ENCODE measurements at regions of chr7 and their contacts with region 1.

Region 1: GRCh38 chr7:151017953-151018420 is 6.3 kb downstream of the ATG9B start:
- DNase-seq: no peak
- H3K4me3 ChIP-seq: peak overlapping the region; percentile 47
- CTCF ChIP-seq: peak; percentile 100

Region 2: DNA sequence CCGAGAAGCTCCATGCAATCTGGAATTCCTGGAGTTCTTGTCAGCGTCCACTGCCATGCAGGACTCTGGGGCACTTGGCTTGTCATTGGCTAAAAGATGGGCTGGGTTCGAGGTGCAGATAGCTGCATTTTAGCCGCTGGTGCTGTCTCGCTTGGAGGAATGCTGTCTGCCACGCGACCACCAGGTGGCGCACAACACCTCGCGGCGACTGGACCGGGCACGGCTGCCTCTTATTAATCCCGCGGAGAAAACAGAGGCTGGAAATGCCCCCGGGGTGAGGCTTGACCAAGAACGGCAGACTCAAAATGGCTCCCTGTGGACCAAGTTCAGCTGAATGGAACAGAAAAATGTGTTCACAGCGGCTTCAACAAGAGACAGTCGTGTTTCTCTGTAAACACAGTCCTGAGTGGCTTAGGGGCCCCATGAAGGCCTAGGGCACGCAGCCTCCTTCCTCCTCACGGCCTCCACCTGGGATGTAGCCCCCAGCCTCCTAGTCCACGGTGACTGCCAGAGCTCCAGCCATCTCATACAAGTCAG is 119.4 kb before region 1 on chr7:
- CTCF ChIA-PET with region 1: interaction called, 22 read pairs
- POLR2A ChIA-PET with region 1: no interaction called
- DNase-seq: no peak
- H3K4me3 ChIP-seq: no peak overlapping the region
- CTCF ChIP-seq: peak; percentile 95

Region 3: DNA sequence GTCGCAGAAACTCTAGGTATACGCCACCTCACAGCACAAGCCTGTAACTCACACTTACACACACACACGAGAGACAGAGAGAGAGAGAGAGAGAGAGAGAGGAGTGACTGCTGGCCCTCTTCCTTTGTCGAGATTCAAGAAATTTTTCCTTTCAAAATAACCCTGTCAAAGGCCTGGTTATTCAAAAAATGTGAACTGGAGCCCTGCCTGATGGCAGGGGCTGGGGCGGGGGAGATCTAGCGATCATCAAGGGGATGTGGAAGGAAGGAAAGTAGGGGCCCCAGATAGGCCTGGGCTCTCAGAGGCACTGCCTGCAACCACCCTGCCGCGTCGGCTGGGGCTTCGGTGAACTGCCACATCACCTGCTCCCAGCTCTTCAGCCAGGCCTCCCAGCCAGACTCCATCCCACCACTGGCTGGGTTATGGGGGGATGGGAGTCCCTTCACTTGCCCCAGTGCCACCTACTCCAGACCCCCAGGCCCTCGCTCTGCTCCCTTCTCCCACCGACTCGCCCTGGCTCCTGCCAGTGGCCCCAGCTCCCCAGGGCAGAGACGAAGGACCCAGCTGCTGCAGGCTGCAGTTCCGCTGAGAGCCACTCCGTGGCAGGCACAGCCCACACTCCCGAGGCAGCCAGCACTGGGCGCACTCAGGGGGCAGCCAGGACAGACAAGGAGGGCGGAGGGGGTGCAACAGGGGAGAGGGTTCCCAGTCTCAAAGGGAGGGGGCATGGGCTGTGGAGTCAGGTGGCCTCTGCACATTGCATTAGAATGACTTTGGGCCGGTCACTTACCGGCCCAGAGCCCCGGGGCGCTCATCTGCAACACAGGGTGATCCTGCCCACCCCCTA is 55.2 kb before region 1 on chr7:
- CTCF ChIA-PET with region 1: interaction called, 34 read pairs
- POLR2A ChIA-PET with region 1: no interaction called
- DNase-seq: no peak
- H3K4me3 ChIP-seq: no peak overlapping the region
- CTCF ChIP-seq: peak; percentile 97

Region 4: GRCh38 chr7:150988230-150989226 is 29.5 kb before region 1 on chr7:
- CTCF ChIA-PET with region 1: interaction called, 18 read pairs
- POLR2A ChIA-PET with region 1: no interaction called
- DNase-seq: no peak
- H3K4me3 ChIP-seq: no peak overlapping the region
- CTCF ChIP-seq: peak; percentile 72

Region 5: GRCh38 chr7:150994141-150994964 is 23.6 kb before region 1 on chr7:
- CTCF ChIA-PET with region 1: interaction called, 14 read pairs
- POLR2A ChIA-PET with region 1: no interaction called
- DNase-seq: no peak
- H3K4me3 ChIP-seq: no peak overlapping the region
- CTCF ChIP-seq: no peak

Region 6: GRCh38 chr7:151028131-151028947 is 10.4 kb after region 1 on chr7 and contains the start of gene ABCB8:
- CTCF ChIA-PET with region 1: interaction called, 77 read pairs
- POLR2A ChIA-PET with region 1: interaction called, 6 read pairs
- DNase-seq: peak; percentile 90
- H3K4me3 ChIP-seq: peak within 1 kb of the TSS; percentile 83
- CTCF ChIP-seq: peak; percentile 42

Region 7: GRCh38 chr7:151104411-151105235 is 86.6 kb after region 1 on chr7:
- CTCF ChIA-PET with region 1: interaction called, 190 read pairs
- POLR2A ChIA-PET with region 1: interaction called, 3 read pairs
- DNase-seq: peak; percentile 69
- H3K4me3 ChIP-seq: no peak overlapping the region
- CTCF ChIP-seq: no peak